ENCODE measurements at regions of chr5 and their contacts with region 1.

Region 1: GRCh38 chr5:179763215-179763945 is 30.4 kb upstream of the LTC4S start:
- DNase-seq: peak; percentile 67
- ATAC-seq: peak; percentile 54
- H3K4me3 Mint-ChIP-seq: no peak overlapping the region
- H3K27ac Mint-ChIP-seq: no peak overlapping the region
- H3K4me1 Mint-ChIP-seq: peaks cover 47% of the 10 kb centered on the region
- H3K27me3 Mint-ChIP-seq: no peaks in the 10 kb centered on the region

Region 2: GRCh38 chr5:179495906-179496455 is 267.4 kb before region 1 on chr5:
- CTCF ChIA-PET with region 1: no interaction called
- POLR2A ChIA-PET with region 1: no interaction called
- DNase-seq: no peak
- ATAC-seq: no peak
- H3K4me3 Mint-ChIP-seq: no peak overlapping the region
- H3K27ac Mint-ChIP-seq: no peak overlapping the region
- H3K4me1 Mint-ChIP-seq: no peaks in the 10 kb centered on the region
- H3K27me3 Mint-ChIP-seq: peaks cover 3% of the 10 kb centered on the region

Region 3: DNA sequence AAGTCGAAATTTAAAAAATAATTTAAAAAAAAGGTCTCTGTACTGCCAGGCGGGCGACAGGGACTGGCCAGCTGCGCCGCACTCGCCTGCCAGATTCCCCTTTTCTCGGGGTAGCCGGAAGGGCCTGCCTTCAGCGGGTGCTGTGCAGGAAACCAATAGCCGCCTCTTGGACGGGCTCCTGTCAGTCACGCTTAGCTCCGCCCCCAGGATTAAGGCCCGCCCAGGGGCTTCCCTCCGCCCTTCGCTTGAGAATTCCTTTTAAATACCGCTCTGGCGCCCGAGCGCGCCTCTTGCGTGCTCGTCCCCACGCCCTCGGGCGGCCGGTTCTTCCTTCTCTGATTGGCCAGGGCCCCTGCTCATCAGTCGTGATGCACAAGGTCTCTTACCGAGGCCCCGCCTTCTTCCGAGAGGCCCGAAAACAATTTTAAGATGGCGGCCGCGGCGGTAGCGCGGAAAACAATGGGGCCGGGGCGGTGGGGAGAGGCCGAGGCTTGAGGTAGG is 30.9 kb before region 1 on chr5 and contains the start of gene MAML1:
- CTCF ChIA-PET with region 1: interaction called, 12 read pairs
- POLR2A ChIA-PET with region 1: no interaction called
- DNase-seq: peak; percentile 100
- ATAC-seq: peak; percentile 98
- H3K4me3 Mint-ChIP-seq: peak within 1 kb of the TSS; percentile 97
- H3K27ac Mint-ChIP-seq: peak within 1 kb of the TSS; percentile 90
- H3K4me1 Mint-ChIP-seq: peaks cover 33% of the 10 kb centered on the region
- H3K27me3 Mint-ChIP-seq: no peaks in the 10 kb centered on the region
- total RNA-seq, gene MAML1: 28.9 to 30.0 TPM

Region 4: GRCh38 chr5:179738742-179739141 is 24.6 kb before region 1 on chr5:
- CTCF ChIA-PET with region 1: interaction called, 15 read pairs
- POLR2A ChIA-PET with region 1: no interaction called
- DNase-seq: no peak
- ATAC-seq: no peak
- H3K4me3 Mint-ChIP-seq: no peak overlapping the region
- H3K27ac Mint-ChIP-seq: peak overlapping the region; percentile 53
- H3K4me1 Mint-ChIP-seq: peaks cover 40% of the 10 kb centered on the region
- H3K27me3 Mint-ChIP-seq: no peaks in the 10 kb centered on the region

Region 5: GRCh38 chr5:179777909-179778308 is 14.5 kb after region 1 on chr5:
- CTCF ChIA-PET with region 1: interaction called, 25 read pairs
- POLR2A ChIA-PET with region 1: no interaction called
- DNase-seq: no peak
- ATAC-seq: no peak
- H3K4me3 Mint-ChIP-seq: no peak overlapping the region
- H3K27ac Mint-ChIP-seq: no peak overlapping the region
- H3K4me1 Mint-ChIP-seq: no peaks in the 10 kb centered on the region
- H3K27me3 Mint-ChIP-seq: no peaks in the 10 kb centered on the region

Region 6: GRCh38 chr5:179795863-179796833 is 32.8 kb after region 1 on chr5:
- CTCF ChIA-PET with region 1: interaction called, 48 read pairs
- POLR2A ChIA-PET with region 1: interaction called, 3 read pairs
- DNase-seq: peak; percentile 72
- ATAC-seq: peak; percentile 71
- H3K4me3 Mint-ChIP-seq: peak overlapping the region; percentile 36
- H3K27ac Mint-ChIP-seq: peak overlapping the region; percentile 46
- H3K4me1 Mint-ChIP-seq: peaks cover 36% of the 10 kb centered on the region
- H3K27me3 Mint-ChIP-seq: no peaks in the 10 kb centered on the region

Region 7: GRCh38 chr5:179806250-179807222 is 43.2 kb after region 1 on chr5 and contains the start of gene MGAT4B:
- CTCF ChIA-PET with region 1: interaction called, 18 read pairs
- POLR2A ChIA-PET with region 1: no interaction called
- DNase-seq: peak; percentile 75
- ATAC-seq: peak; percentile 83
- H3K4me3 Mint-ChIP-seq: peak within 1 kb of the TSS; percentile 85
- H3K27ac Mint-ChIP-seq: peak within 1 kb of the TSS; percentile 79
- H3K4me1 Mint-ChIP-seq: peaks cover 27% of the 10 kb centered on the region
- H3K27me3 Mint-ChIP-seq: no peaks in the 10 kb centered on the region
- total RNA-seq, gene MGAT4B: 85.9 to 103 TPM

Region 8: GRCh38 chr5:179893069-179893957 is 129.9 kb after region 1 on chr5:
- CTCF ChIA-PET with region 1: no interaction called
- POLR2A ChIA-PET with region 1: no interaction called
- DNase-seq: no peak
- ATAC-seq: no peak
- H3K4me3 Mint-ChIP-seq: no peak overlapping the region
- H3K27ac Mint-ChIP-seq: no peak overlapping the region
- H3K4me1 Mint-ChIP-seq: no peaks in the 10 kb centered on the region
- H3K27me3 Mint-ChIP-seq: no peaks in the 10 kb centered on the region

Region 9: DNA sequence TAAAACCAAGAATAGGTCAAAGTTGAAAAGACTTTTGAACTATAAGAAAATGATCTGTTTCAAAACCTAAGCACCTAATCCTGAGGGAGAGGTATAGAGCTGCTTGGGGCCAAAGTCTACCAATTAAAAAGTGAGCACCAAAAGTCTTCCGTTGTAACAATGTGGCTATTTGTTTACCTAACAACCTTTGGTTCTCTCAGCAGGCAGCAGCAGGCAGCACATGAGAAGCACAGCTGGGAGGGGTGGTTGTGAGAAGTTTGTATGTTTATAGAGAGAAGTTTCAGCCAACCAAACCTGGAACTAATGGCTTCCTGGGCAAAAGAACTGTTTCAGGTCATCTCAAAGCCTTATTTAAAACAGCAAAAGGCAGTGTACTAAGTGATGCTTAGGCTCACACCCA is 204.1 kb after region 1 on chr5:
- CTCF ChIA-PET with region 1: no interaction called
- POLR2A ChIA-PET with region 1: no interaction called
- DNase-seq: no peak
- ATAC-seq: no peak
- H3K4me3 Mint-ChIP-seq: no peak overlapping the region
- H3K27ac Mint-ChIP-seq: no peak overlapping the region
- H3K4me1 Mint-ChIP-seq: peaks cover 11% of the 10 kb centered on the region
- H3K27me3 Mint-ChIP-seq: no peaks in the 10 kb centered on the region